Sigmoid colon (tissue), 7 donors: ENCODE measurements at regions of chr20 and their contacts with region 1.

Region 1: GRCh38 chr20:54207743-54208547 is at the start of gene PFDN4:
- DNase-seq: peak; percentile 85
- H3K4me3 ChIP-seq: peak within 1 kb of the TSS; percentile 82 to 98 (median 84)
- H3K27ac ChIP-seq: peak within 1 kb of the TSS; percentile 88 to 97 (median 90)
- H3K4me1 ChIP-seq: peaks cover 0 to 41% (median 30%) of the 10 kb centered on the region in 4 donors
- H3K27me3 ChIP-seq: no peaks in the 10 kb centered on the region
- CTCF ChIP-seq: peak in 3 of 4 experiments; percentile 68 to 79 (median 76)
- EP300 ChIP-seq: peak in 1 of 4 donors; percentile 7
- POLR2A ChIP-seq: no peak
- total RNA-seq, gene PFDN4: 75.9 to 284 (median 180) TPM

Region 2: GRCh38 chr20:53594068-53595017 is 613.6 kb before region 1 on chr20:
- intact Hi-C with region 1: loop called (anchors 5 kb)
- DNase-seq: peak; percentile 98
- H3K4me3 ChIP-seq: peak overlapping the region; percentile 82 to 97 (median 95)
- H3K27ac ChIP-seq: peak overlapping the region; percentile 98 to 99 (median 98)
- H3K4me1 ChIP-seq: peaks cover 0 to 20% (median 13%) of the 10 kb centered on the region in 4 donors
- H3K27me3 ChIP-seq: no peaks in the 10 kb centered on the region
- CTCF ChIP-seq: no peak
- EP300 ChIP-seq: no peak
- POLR2A ChIP-seq: no peak

Region 3: GRCh38 chr20:53915446-53916172 is 292.3 kb before region 1 on chr20:
- intact Hi-C with region 1: loop called (anchors 10 kb)
- DNase-seq: peak; percentile 96
- H3K4me3 ChIP-seq: peak overlapping the region; percentile 36 to 58 (median 56)
- H3K27ac ChIP-seq: peak overlapping the region; percentile 79 to 87 (median 80)
- H3K4me1 ChIP-seq: peaks cover 0 to 38% (median 33%) of the 10 kb centered on the region in 4 donors
- H3K27me3 ChIP-seq: no peaks in the 10 kb centered on the region
- CTCF ChIP-seq: peak; percentile 88 to 94 (median 90)
- EP300 ChIP-seq: no peak
- POLR2A ChIP-seq: no peak